Naive thymus-derived CD4-positive, alpha-beta T cell (primary cell): ENCODE measurements at regions of chr20 and their contacts with region 1.

Region 1: DNA sequence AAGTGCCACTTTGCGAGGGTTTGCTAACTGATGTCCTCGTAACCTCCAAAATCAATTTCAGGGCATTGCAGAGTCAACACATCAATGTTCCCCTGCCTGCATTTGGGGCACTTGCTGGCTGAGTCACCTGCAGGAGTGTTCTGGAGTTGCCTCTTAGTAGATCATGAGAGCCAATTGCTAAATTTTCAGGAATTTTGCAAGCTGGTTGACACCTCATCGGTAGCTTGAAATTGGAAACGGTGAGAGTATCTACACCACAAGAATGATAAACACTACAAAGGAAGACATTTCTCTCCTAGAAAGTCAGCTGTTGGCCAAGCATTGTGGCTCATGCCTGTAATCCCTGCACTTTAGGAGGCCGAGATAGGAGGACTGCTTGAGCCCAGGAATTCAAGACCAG is 10.8 kb upstream of the BFSP1 start:
- DNase-seq: no peak
- ATAC-seq: no peak
- H3K4me3 ChIP-seq: no peak overlapping the region
- H3K4me3 Mint-ChIP-seq: no peak overlapping the region
- H3K27ac ChIP-seq: no peak overlapping the region
- H3K27ac Mint-ChIP-seq: no peak overlapping the region
- H3K4me1 ChIP-seq: no peaks in the 10 kb centered on the region
- H3K4me1 Mint-ChIP-seq: peaks cover 0 to 19% (median 0%) of the 10 kb centered on the region in 7 donors
- H3K27me3 ChIP-seq: no peaks in the 10 kb centered on the region
- H3K27me3 Mint-ChIP-seq: peaks cover 10 to 53% (median 22%) of the 10 kb centered on the region in 5 donors

Region 2: DNA sequence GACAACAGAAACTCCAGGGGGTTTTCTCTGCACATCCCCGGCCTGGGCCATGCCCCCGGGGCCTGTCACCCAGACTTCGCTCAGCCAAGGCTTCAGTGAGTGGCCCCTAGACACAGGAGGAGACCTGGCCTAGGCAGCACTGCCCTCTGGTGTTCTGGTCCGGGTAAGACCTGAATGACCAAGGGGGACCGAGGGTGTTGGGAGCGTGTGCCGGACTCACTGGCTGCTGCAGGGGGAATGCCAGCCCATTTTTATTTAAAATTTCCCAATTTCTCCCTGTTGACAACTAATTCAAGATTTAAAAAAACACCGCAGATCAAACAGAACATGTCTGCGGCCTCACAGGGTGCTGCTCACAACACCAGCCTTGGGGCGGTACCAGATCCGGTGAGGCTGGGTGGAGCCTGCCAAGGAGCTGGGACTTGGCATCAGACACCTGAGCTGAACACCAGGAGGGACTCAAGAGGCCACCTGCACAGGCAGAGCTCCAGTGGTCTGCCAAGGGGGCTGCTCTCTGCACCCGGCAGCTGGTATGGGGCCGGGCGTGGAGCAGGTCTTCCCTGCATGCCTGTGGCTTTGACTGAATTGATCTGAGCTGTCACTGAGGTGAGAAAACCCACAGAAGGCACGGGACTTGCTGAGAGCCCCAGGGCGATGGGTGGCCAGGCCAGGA is 75.7 kb after region 1 on chr20:
- CTCF ChIA-PET with region 1: interaction called, 13 read pairs
- POLR2A ChIA-PET with region 1: no interaction called
- intact Hi-C with region 1: loop called (anchors 1 kb)
- DNase-seq: peak; percentile 22 to 59 (median 30)
- ATAC-seq: peak; percentile 56
- H3K4me3 ChIP-seq: no peak overlapping the region
- H3K4me3 Mint-ChIP-seq: no peak overlapping the region
- H3K27ac ChIP-seq: no peak overlapping the region
- H3K27ac Mint-ChIP-seq: peak overlapping the region in 1 of 9 donors; percentile 14
- H3K4me1 ChIP-seq: peaks cover 3 to 4% of the 10 kb centered on the region in 2 donors
- H3K4me1 Mint-ChIP-seq: peaks cover 0 to 8% (median 6%) of the 10 kb centered on the region in 7 donors
- H3K27me3 ChIP-seq: no peaks in the 10 kb centered on the region
- H3K27me3 Mint-ChIP-seq: no peaks in the 10 kb centered on the region